ENCODE measurements at regions of chr5 and their contacts with region 1.

Region 1: GRCh38 chr5:74766849-74767578 is at the starts of genes GFM2 and NSA2:
- DNase-seq: peak; percentile 91 to 94 (median 93)
- ATAC-seq: peak; percentile 96 to 100 (median 99)
- H3K4me3 ChIP-seq: peak within 1 kb of the TSS; percentile 67 to 96 (median 92)
- H3K27ac ChIP-seq: peak within 1 kb of the TSS; percentile 52 to 86 (median 81)
- H3K4me1 ChIP-seq: peaks cover 0 to 35% (median 28%) of the 10 kb centered on the region in 12 donors
- H3K27me3 ChIP-seq: no peaks in the 10 kb centered on the region
- CTCF ChIP-seq: no peak
- POLR2A ChIP-seq: peak in 1 of 2 donors; percentile 52
- total RNA-seq, gene GFM2: 26.3 to 54.9 (median 46.1) TPM
- total RNA-seq, gene NSA2: 33.2 to 77.0 (median 43.8) TPM

Region 2: GRCh38 chr5:73831066-73831465 is 935.9 kb before region 1 on chr5:
- intact Hi-C with region 1: no loop called
- DNase-seq: no peak
- ATAC-seq: no peak
- H3K4me3 ChIP-seq: no peak overlapping the region
- H3K27ac ChIP-seq: no peak overlapping the region
- H3K4me1 ChIP-seq: peaks cover 0 to 4% (median 0%) of the 10 kb centered on the region in 12 donors
- H3K27me3 ChIP-seq: no peaks in the 10 kb centered on the region
- CTCF ChIP-seq: no peak
- POLR2A ChIP-seq: no peak

Region 3: DNA sequence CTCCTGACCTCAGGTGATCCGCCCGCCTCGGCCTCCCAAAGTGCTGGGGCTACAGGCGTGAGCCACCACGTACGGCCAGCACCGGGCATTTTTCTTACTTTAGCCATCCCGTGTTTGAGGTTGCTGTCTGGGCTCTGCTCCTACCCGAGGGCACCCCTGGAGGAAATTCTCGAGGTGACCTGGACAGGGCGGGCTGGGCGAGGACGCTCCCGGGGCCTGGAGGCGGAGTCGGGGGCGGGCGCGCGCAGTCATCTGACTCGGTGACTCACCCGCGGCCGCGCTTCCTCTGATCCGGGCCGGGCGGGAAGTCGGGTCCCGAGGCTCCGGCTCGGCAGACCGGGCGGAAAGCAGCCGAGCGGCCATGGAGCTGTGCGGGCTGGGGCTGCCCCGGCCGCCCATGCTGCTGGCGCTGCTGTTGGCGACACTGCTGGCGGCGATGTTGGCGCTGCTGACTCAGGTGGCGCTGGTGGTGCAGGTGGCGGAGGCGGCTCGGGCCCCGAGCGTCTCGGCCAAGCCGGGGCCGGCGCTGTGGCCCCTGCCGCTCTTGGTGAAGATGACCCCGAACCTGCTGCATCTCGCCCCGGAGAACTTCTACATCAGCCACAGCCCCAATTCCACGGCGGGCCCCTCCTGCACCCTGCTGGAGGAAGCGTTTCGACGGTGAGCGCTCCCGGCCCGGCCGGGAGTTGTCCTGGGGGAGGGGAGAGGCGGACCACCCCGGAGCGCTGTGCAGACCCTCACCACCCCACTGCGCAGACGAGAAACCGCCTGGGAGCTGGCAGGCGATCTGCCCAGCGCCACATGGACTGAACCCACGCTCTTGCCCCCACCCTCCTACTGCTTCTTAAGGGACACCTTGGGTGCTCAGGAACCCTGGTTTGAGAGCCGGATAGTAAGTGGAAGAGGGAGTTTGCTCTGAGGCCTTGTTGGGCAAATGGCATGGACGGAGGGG is 81.8 kb before region 1 on chr5 and contains the start of gene HEXB:
- intact Hi-C with region 1: loop called in 2 of 10 experiments (anchors 5 kb)
- DNase-seq: peak; percentile 92 to 96 (median 93)
- ATAC-seq: peak; percentile 97 to 99 (median 98)
- H3K4me3 ChIP-seq: peak within 1 kb of the TSS; percentile 79 to 99 (median 93)
- H3K27ac ChIP-seq: peak within 1 kb of the TSS; percentile 55 to 96 (median 90)
- H3K4me1 ChIP-seq: peaks cover 0 to 29% (median 18%) of the 10 kb centered on the region in 12 donors
- H3K27me3 ChIP-seq: no peaks in the 10 kb centered on the region
- CTCF ChIP-seq: no peak
- POLR2A ChIP-seq: peak in 1 of 2 donors; percentile 94
- total RNA-seq, gene HEXB: 71.3 to 278 (median 116) TPM

Region 4: DNA sequence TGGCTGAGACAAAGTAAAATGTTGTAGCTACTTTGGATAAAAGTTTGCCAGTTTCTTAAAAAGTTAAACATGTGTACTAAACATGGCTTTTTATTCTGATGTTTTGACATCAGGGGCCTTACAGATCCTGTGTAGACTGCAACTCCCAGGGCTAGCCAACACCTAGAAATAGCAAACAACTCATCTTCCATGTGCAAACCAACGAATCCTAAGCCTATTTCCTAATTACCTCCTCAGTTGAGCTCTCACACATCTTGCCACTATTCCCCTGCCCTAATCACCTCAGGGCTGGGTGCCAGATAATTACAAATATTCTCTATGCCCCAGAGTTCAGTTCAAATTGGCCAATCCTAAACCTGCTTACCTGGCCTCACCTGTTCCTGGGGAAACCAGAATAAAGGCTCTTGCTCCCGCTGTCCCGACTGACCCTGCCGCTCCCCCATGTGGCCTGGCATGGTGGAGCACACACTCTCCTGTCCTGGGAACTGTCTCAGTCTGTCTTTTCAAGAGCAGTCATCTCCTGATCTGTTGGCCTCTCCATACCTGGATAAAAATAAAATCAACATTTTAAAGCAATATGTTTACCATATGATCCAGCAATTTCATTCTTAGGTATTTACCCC is 136.3 kb after region 1 on chr5:
- intact Hi-C with region 1: loop called in 2 of 10 experiments (anchors 5 kb)
- DNase-seq: no peak
- ATAC-seq: peak in 3 of 4 donors; percentile 71 to 75 (median 73)
- H3K4me3 ChIP-seq: no peak overlapping the region
- H3K27ac ChIP-seq: no peak overlapping the region
- H3K4me1 ChIP-seq: no peaks in the 10 kb centered on the region
- H3K27me3 ChIP-seq: no peaks in the 10 kb centered on the region
- CTCF ChIP-seq: peak in 10 of 12 donors; percentile 22 to 49 (median 38)
- POLR2A ChIP-seq: no peak

Region 5: DNA sequence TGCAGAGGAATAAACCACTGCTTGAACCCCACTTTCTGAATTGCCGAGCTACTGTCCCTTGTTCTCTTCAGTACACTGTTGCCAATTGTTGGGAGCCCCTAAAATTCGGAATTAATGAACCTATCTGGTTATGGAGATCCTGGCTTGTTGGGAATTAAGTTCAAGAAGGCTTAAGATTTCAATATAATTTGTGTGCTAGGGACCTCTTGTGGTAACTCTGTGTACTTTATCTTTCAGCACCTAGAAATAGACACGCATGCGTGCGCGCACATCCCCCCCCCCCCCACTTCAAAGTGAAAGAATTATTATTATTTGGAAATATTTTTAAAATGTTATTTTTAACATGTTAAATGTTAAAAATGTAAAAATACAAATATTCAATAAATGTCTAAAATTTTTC is 152.5 kb after region 1 on chr5:
- intact Hi-C with region 1: loop called in 8 of 10 experiments (anchors 2 to 10 kb)
- DNase-seq: no peak
- ATAC-seq: peak in 1 of 4 donors; percentile 55
- H3K4me3 ChIP-seq: no peak overlapping the region
- H3K27ac ChIP-seq: no peak overlapping the region
- H3K4me1 ChIP-seq: no peaks in the 10 kb centered on the region
- H3K27me3 ChIP-seq: peaks cover 0 to 3% (median 0%) of the 10 kb centered on the region in 9 donors
- CTCF ChIP-seq: peak; percentile 23 to 60 (median 48)
- POLR2A ChIP-seq: no peak

Region 6: DNA sequence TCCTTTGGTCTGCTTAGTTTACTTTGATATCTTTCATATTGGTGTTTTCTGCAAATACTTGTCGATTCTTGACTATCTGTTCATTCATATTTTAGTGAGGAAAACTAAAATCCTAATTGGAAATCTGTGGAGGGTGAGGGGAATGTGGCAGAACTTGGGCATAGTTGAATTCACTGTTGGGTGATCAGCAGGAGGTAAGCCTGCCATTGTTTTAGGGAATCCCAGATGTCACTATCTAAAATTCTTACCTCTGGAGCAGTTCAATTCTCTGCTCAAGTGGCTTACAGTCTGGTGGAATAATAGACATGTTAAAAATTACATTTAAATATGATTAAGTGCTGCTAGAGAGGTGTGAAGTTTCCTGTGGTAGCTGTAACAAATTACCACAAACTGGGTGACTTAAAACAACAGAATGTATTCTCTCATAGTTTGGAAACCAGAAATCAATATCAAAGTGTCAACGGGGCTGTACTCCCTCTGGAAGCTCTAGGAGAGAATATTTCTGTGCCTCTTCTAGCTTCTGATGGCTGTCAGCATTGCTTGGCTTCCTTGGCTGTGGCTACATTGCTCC is 375.6 kb after region 1 on chr5:
- intact Hi-C with region 1: no loop called
- DNase-seq: no peak
- ATAC-seq: no peak
- H3K4me3 ChIP-seq: no peak overlapping the region
- H3K27ac ChIP-seq: no peak overlapping the region
- H3K4me1 ChIP-seq: no peaks in the 10 kb centered on the region
- H3K27me3 ChIP-seq: no peaks in the 10 kb centered on the region
- CTCF ChIP-seq: no peak
- POLR2A ChIP-seq: no peak

Region 7: DNA sequence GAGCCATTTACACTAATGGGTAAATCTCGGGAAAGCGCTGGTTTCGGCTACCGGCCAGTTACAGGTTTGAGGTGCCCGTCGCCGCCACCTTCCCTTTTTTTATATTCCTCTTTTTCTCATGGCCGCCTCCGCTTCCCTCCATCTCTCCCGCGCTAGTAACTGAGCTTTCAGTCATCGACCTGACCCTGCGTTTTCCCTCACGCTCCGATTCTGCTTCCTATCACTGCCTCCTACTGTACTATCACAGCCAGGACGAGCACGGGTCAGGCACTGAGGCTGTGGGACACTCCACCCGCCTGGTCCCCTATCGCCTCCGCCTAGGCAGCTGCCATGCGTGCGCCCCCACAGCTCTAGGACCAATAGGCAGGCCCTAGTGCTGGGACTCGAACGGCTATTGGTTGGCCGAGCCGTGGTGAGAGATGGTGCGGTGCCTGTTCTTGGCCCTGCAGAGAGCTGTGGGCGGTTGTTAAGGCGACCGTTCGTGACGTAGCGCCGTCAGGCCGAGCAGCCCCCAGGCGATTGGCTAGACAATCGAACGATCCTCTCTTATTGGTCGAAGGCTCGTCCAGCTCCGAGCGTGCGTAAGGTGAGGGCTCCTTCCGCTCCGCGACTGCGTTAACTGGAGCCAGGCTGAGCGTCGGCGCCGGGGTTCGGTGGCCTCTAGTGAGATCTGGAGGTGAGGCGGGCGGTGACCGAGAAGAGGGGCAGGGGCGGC is 569.8 kb after region 1 on chr5 and contains the start of gene HMGCR:
- intact Hi-C with region 1: loop called in 1 of 10 experiments (anchors 10 kb)
- DNase-seq: peak; percentile 99 to 100 (median 99)
- ATAC-seq: peak; percentile 99 to 100 (median 100)
- H3K4me3 ChIP-seq: peak within 1 kb of the TSS; percentile 75 to 99 (median 89)
- H3K27ac ChIP-seq: peak within 1 kb of the TSS; percentile 54 to 98 (median 88)
- H3K4me1 ChIP-seq: peaks cover 0 to 28% (median 14%) of the 10 kb centered on the region in 12 donors
- H3K27me3 ChIP-seq: no peaks in the 10 kb centered on the region
- CTCF ChIP-seq: peak in 5 of 12 donors; percentile 19 to 55 (median 35)
- POLR2A ChIP-seq: peak in 1 of 2 donors; percentile 69
- total RNA-seq, gene HMGCR: 6.0 to 15.2 (median 11.9) TPM

Measured in heart left ventricle (tissue), 16 donors.